ENCODE measurements at regions of chr7 and their contacts with region 1.

Region 1: DNA sequence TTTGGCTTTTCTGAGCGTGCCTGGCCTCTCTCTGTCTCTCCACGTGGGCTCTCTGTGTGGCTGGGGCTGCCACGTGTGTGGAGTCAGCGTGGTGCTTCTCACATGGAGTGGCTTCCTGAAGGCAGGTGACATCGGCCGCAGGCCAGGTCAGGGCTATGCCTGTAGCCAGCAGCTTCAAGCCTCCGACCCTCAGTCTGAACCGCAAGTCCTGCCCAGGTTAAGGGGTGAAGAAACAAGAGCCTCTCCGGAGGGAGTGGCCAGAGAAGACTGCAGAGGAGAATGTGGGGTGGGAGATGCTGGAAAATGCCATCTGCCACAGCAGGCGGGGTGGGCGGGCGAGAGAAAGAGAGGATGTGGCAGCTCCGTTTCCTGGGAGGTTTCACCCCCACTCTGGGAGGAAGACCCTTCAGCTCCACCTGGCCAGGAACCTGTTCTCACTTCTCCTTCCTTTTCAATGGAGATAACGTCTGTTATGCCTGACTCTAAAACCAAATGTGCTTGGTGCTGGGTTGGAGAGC is 14.3 kb upstream of the VIPR2 start:
- DNase-seq: no peak
- ATAC-seq: no peak; the same call in 2 of the 3 replicates
- H3K4me3 ChIP-seq: no peak overlapping the region
- H3K27ac ChIP-seq: no peak overlapping the region
- H3K4me1 ChIP-seq: peaks cover 0 to 3% of the 10 kb centered on the region in 2 experiments; a peak in 1 of 5 replicates
- H3K27me3 ChIP-seq: peaks cover 59 to 67% of the 10 kb centered on the region in 2 experiments
- CTCF ChIP-seq: no peak
- EP300 ChIP-seq: no peak
- POLR2A ChIP-seq: no peak
- RAD21 ChIP-seq: no peak

Region 2: GRCh38 chr7:158779061-158780000 is 379.6 kb before region 1 on chr7:
- CTCF ChIA-PET with region 1: no interaction called
- POLR2A ChIA-PET with region 1: no interaction called
- in situ Hi-C with region 1: no loop called
- intact Hi-C with region 1: no loop called
- DNase-seq: no peak
- ATAC-seq: no peak
- H3K4me3 ChIP-seq: no peak overlapping the region
- H3K27ac ChIP-seq: no peak overlapping the region
- H3K4me1 ChIP-seq: peaks cover 0 to 11% of the 10 kb centered on the region in 2 experiments; a peak in 4 of 5 replicates
- H3K27me3 ChIP-seq: no peaks in the 10 kb centered on the region; a peak in 1 of 5 replicates
- CTCF ChIP-seq: no peak
- EP300 ChIP-seq: no peak
- POLR2A ChIP-seq: no peak
- RAD21 ChIP-seq: no peak

Region 3: GRCh38 chr7:159127691-159128642 is 31.0 kb before region 1 on chr7:
- CTCF ChIA-PET with region 1: no interaction called
- POLR2A ChIA-PET with region 1: interaction called, 4 read pairs
- in situ Hi-C with region 1: no loop called
- intact Hi-C with region 1: loop called (anchors 1 kb)
- DNase-seq: no peak
- ATAC-seq: no peak
- H3K4me3 ChIP-seq: no peak overlapping the region
- H3K27ac ChIP-seq: no peak overlapping the region
- H3K4me1 ChIP-seq: no peaks in the 10 kb centered on the region
- H3K27me3 ChIP-seq: peaks cover 21 to 46% of the 10 kb centered on the region in 2 experiments; a peak in 4 of 5 replicates
- CTCF ChIP-seq: no peak
- EP300 ChIP-seq: no peak
- POLR2A ChIP-seq: no peak
- RAD21 ChIP-seq: no peak